ENCODE measurements at regions of chr6 and their contacts with region 1.

Region 1: DNA sequence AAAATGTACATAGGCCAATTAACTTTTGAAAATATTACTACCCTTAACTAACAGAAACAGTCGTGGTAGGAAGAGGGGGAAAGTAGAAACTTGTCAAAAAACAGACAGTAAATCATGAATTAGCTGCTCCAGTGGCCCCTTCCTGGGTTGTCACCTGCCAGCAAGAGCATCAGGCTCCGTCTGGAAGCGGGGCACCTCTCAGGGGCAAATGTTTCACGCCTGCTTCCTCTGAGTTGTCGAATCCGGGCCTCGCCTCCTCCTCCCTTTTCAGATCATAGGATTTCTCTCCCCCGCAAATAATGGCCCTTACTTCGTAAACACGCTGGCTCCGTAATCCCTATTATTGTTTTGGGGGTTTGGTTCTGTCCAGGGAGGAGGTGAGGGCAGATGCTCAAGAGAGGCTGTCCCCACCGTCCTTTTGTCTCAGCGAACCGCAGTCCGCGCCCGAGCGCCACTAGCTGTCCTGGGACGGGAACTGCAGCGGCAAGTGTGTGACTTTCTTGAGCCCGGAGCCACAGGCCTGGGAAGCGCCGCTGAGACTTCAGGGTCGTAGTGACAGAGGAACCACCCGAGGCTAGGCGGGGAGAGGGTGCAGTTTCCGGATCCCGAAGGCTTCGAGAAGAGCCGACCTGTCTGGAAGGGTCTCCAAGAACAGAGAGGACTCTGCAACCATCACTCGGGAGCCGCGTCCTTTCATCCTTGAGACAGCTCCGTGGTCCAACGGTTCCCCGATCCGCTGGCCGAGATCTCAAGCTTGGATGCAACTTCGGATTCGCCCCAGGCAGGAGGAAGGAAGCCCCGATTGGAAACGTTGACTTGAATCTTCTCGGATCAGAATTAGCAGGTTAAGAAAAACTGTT is 214.5 kb upstream of the ZNF184 start:
- DNase-seq: peak; percentile 91
- ATAC-seq: peak; percentile 81
- H3K4me3 Mint-ChIP-seq: peak overlapping the region; percentile 87
- H3K27ac Mint-ChIP-seq: peak overlapping the region; percentile 84
- H3K4me1 Mint-ChIP-seq: peaks cover 20% of the 10 kb centered on the region
- H3K27me3 Mint-ChIP-seq: peaks cover 9% of the 10 kb centered on the region

Region 2: GRCh38 chr6:26553635-26554446 is 1133.5 kb before region 1 on chr6:
- CTCF ChIA-PET with region 1: no interaction called
- POLR2A ChIA-PET with region 1: no interaction called
- intact Hi-C with region 1: loop called in 1 of 2 experiments (anchors 10 kb)
- DNase-seq: peak; percentile 89
- ATAC-seq: peak; percentile 58
- H3K4me3 Mint-ChIP-seq: no peak overlapping the region
- H3K27ac Mint-ChIP-seq: no peak overlapping the region
- H3K4me1 Mint-ChIP-seq: peaks cover 27% of the 10 kb centered on the region
- H3K27me3 Mint-ChIP-seq: no peaks in the 10 kb centered on the region

Region 3: GRCh38 chr6:27177485-27178406 is 509.6 kb before region 1 on chr6:
- CTCF ChIA-PET with region 1: interaction called, 4 read pairs
- POLR2A ChIA-PET with region 1: no interaction called
- intact Hi-C with region 1: loop called in 1 of 2 experiments (anchors 1 kb)
- DNase-seq: peak; percentile 86
- ATAC-seq: peak; percentile 89
- H3K4me3 Mint-ChIP-seq: peak overlapping the region; percentile 88
- H3K27ac Mint-ChIP-seq: peak overlapping the region; percentile 87
- H3K4me1 Mint-ChIP-seq: peaks cover 2% of the 10 kb centered on the region
- H3K27me3 Mint-ChIP-seq: no peaks in the 10 kb centered on the region

Region 4: GRCh38 chr6:27472617-27473400 is 214.6 kb before region 1 on chr6 and contains the start of gene ZNF184:
- CTCF ChIA-PET with region 1: interaction called, 3 read pairs
- POLR2A ChIA-PET with region 1: interaction called, 4 read pairs
- intact Hi-C with region 1: loop called in 1 of 2 experiments (anchors 10 kb)
- DNase-seq: peak; percentile 91
- ATAC-seq: peak; percentile 83
- H3K4me3 Mint-ChIP-seq: peak within 1 kb of the TSS; percentile 84
- H3K27ac Mint-ChIP-seq: peak within 1 kb of the TSS; percentile 97
- H3K4me1 Mint-ChIP-seq: peaks cover 44% of the 10 kb centered on the region
- H3K27me3 Mint-ChIP-seq: no peaks in the 10 kb centered on the region
- total RNA-seq, gene ZNF184: 11.8 to 14.5 TPM

Region 5: DNA sequence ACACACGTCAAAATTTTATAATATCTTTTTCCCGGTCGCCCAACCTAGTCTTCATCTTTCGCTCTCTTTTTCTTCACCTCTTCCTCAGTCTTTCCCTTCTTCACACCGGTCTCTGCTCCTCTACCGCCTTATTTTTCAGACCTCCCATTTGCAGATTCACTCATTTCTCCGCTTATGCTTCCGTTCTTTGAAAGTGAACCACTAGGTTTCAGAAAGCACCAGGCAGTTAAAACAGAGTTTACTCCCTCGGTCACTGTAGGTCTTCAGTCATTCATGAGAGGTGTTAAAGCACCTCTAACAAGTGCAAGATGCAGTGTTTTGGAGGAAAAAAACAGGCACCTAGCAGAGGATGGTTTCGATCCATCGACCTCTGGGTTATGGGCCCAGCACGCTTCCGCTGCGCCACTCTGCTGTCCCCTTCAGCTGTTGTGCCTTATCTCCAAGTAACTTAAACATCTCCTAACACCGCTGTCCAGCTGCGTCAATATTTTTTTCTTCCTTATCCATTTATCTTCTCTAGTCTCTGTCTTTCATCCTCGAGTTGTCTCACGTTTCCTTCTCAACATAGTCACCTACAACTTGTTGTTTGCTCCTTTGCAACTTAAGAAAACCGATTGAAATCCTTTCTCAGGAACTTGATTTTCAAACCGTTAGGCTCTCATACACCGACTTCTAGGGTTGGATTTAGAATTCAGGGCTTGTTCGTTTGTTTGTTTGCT is 94.7 kb before region 1 on chr6:
- CTCF ChIA-PET with region 1: no interaction called
- POLR2A ChIA-PET with region 1: no interaction called
- intact Hi-C with region 1: loop called in 1 of 2 experiments (anchors 5 kb)
- DNase-seq: peak; percentile 72
- ATAC-seq: peak; percentile 94
- H3K4me3 Mint-ChIP-seq: no peak overlapping the region
- H3K27ac Mint-ChIP-seq: no peak overlapping the region
- H3K4me1 Mint-ChIP-seq: no peaks in the 10 kb centered on the region
- H3K27me3 Mint-ChIP-seq: peaks cover 35% of the 10 kb centered on the region

Region 6: GRCh38 chr6:27795697-27796494 is 108.5 kb after region 1 on chr6:
- CTCF ChIA-PET with region 1: no interaction called
- POLR2A ChIA-PET with region 1: no interaction called
- intact Hi-C with region 1: loop called in 1 of 2 experiments (anchors 1 kb)
- DNase-seq: peak; percentile 59
- ATAC-seq: peak; percentile 55
- H3K4me3 Mint-ChIP-seq: no peak overlapping the region
- H3K27ac Mint-ChIP-seq: peak overlapping the region; percentile 13
- H3K4me1 Mint-ChIP-seq: peaks cover 26% of the 10 kb centered on the region
- H3K27me3 Mint-ChIP-seq: peaks cover 6% of the 10 kb centered on the region

Region 7: DNA sequence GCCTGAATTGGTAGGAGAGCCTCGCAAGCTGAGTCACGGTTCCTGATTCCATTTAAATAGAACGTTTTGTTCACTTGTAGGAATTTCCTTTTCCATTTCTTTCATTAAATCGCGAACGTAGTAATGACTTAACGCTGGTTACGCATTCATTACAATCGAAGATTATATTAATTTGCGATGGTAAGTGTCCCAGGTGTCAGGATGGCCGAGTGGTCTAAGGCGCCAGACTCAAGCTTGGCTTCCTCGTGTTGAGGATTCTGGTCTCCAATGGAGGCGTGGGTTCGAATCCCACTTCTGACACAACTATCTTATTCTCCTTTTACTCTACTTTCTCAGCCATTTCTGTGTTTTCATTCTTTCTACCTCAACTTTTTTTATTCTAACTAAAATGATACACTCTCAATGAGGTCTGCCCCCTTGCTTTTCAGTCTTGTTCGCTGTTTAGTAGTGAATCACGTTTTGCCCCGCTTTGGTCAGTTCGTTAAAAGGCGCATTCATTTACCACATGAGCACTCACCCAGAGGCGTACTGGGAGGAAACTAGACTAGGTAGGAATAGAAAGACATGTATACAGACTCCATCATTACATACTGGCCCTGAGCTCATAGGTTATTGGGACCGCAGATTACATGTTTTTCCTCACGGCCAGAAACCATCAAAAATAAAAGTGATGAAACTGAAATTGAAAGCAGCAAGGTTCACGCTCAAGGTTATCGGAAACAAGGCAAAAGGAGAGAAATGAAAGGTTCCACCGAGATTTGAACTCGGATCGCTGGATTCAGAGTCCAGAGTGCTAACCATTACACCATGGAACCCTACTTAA is 1253.7 kb after region 1 on chr6:
- CTCF ChIA-PET with region 1: no interaction called
- POLR2A ChIA-PET with region 1: no interaction called
- intact Hi-C with region 1: loop called in 1 of 2 experiments (anchors 5 kb)
- DNase-seq: peak; percentile 87
- ATAC-seq: peak; percentile 72
- H3K4me3 Mint-ChIP-seq: peak overlapping the region; percentile 79
- H3K27ac Mint-ChIP-seq: peak overlapping the region; percentile 96
- H3K4me1 Mint-ChIP-seq: peaks cover 39% of the 10 kb centered on the region
- H3K27me3 Mint-ChIP-seq: no peaks in the 10 kb centered on the region

Region 8: DNA sequence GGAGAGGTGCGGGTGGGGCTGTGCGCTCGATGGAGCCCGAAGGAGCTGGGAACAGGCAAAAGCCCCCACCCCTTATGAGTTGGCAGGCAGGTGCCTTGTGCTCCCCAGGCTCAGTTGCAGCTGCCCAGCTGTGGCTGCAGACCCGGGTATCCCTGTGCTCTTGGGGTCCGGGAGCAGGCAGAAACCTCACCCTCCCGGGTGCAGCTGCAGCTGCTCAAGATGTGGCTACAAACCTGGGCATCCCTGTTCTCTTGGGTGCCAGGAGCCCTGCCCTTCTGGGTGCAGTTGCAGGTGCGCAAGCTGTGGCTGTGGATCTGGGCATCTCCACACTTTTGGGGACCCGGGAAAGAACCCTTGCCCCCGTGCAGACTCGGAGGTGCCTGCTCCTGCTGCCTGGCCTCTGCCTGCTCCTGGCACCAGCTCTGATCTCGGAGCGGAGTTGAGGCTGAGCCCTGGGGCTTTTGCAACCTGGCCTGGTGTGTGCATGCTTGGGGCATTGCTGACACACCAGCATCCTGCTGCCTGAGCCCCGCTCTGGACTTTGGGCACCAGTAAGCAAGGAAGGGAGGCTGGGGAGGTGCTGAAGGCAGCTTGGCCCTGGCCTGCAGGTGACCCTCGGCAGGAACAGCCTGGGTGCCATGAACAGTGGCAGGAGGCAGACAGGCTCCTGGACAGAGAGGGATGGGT is 1442.1 kb after region 1 on chr6:
- CTCF ChIA-PET with region 1: no interaction called
- POLR2A ChIA-PET with region 1: no interaction called
- intact Hi-C with region 1: no loop called
- DNase-seq: no peak
- ATAC-seq: no peak
- H3K4me3 Mint-ChIP-seq: no peak overlapping the region
- H3K27ac Mint-ChIP-seq: no peak overlapping the region
- H3K4me1 Mint-ChIP-seq: no peaks in the 10 kb centered on the region
- H3K27me3 Mint-ChIP-seq: peaks cover 21% of the 10 kb centered on the region

Measured in activated CD4-positive, alpha-beta T cell treated with anti-CD3 and anti-CD28 coated beads for 36 hours (primary cell).